Right cardiac atrium (tissue), 5 donors: ENCODE measurements at regions of chr6 and their contacts with region 1.

Region 1: DNA sequence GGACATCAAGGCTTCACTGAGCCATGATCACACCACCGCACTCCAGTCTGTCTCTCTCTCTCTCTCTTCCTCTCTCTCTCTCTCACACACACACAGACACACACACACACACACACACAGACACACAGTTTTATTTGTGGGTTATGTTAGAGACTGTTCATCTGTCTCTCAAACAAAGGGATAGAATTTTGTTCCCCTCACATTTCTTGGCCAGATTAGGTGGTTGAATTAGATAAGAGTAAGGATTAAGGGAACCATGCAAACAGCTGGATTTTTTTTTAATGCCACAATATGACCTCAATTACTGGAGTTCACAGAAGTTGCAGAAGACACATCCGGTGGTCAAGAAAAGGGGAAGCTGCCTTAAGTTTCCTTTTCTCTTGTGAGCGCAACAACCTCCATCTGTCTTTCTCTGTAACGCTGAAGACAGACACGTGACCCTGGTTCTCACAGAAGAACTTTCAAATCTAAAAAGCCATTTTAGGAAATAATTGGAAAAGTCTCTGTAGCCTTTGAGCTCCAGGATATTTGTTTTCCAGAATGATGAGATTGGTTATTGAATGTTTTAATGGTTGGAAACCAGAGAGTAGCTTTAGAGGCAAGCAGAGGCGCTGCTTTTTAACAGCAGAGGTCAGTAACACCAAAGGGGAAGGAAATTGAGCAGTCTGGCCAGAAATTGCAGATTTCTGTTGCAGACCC is 33.0 kb upstream of the LGSN start:
- DNase-seq: no peak
- ATAC-seq: peak; percentile 62 to 76
- H3K4me3 ChIP-seq: no peak overlapping the region
- H3K27ac ChIP-seq: no peak overlapping the region
- H3K4me1 ChIP-seq: no peaks in the 10 kb centered on the region
- H3K27me3 ChIP-seq: no peaks in the 10 kb centered on the region

Region 2: GRCh38 chr6:63197741-63198140 is 155.0 kb before region 1 on chr6:
- intact Hi-C with region 1: no loop called
- DNase-seq: no peak
- ATAC-seq: no peak
- H3K4me3 ChIP-seq: no peak overlapping the region
- H3K27ac ChIP-seq: no peak overlapping the region
- H3K4me1 ChIP-seq: no peaks in the 10 kb centered on the region
- H3K27me3 ChIP-seq: no peaks in the 10 kb centered on the region

Region 3: DNA sequence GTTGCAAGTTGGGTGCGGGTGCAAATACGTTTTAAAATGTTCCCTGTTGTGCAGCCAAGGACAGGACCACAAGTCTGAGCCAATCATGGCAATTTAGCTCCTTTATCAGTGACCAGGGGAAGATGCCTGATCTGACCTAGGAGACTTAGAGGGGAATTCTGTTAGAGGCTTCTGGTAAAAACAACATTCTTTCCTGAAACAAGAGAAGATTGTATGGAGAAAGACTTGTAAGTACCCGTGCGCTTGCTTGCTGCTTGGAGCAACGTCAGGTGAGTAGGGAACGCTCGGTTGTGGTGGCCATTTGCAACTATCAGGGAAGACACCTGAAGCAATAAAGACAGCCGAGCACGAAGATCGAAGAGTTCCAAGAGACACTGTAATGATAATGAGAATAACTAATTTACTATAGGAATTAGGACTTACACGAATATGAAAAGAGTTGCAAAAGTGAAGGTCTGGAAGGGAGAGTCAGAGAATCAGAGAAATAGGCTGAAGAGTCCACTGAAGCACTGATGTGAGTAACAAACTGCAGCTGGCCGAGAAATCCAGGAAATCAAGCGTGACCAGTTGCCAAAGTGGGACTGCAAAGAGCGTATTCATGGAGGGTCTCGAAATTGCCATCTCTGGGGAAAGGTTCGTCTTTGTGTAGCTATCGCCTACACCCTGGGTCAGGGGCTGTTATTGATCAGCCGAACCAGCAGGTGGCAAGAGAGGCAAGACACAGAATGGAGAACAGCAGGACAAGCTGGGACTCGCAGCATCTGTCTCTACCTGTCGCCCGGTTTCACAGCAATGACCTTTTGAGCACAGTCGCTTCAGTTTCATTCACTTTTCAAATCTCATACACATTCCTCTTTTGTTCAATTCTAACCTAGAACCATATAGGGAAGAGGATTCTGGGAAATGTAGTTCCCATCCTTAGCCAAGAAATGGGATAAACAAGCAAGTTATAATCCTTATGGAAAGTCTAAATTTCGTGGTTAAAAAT is 245.6 kb after region 1 on chr6:
- intact Hi-C with region 1: loop called in 1 of 4 experiments (anchors 10 kb)
- DNase-seq: peak; percentile 42 to 80 (median 73)
- ATAC-seq: peak; percentile 96 to 97
- H3K4me3 ChIP-seq: peak overlapping the region; percentile 72
- H3K27ac ChIP-seq: no peak overlapping the region
- H3K4me1 ChIP-seq: no peaks in the 10 kb centered on the region
- H3K27me3 ChIP-seq: no peaks in the 10 kb centered on the region